ENCODE measurements at regions of chr2 and their contacts with region 1.

Region 1: DNA sequence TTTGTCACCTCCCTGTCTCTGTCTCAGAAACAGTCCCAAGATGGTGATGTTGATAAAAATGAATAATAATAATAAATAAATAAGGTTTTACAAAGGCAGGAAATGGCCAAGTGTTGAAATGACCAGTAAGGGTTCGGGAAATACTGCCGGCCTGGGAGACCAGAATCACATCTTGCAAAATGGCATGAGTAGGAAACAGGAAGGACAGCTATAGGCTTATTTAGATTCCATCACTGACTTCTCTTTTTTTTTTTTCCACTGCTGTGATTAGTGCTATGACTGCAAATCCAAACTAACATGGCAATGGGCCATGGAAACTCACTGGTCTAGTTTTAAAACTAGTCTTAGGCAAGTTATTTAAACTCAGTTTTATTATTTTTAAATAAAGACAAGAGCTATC is 60.6 kb downstream of the SCN1A start:
- DNase-seq: peak in 1 of 4 donors; percentile 6
- ATAC-seq: no peak
- H3K4me3 ChIP-seq: no peak overlapping the region
- H3K27ac ChIP-seq: no peak overlapping the region
- H3K4me1 ChIP-seq: no peaks in the 10 kb centered on the region
- H3K27me3 ChIP-seq: no peaks in the 10 kb centered on the region
- CTCF ChIP-seq: no peak
- POLR2A ChIP-seq: no peak

Region 2: DNA sequence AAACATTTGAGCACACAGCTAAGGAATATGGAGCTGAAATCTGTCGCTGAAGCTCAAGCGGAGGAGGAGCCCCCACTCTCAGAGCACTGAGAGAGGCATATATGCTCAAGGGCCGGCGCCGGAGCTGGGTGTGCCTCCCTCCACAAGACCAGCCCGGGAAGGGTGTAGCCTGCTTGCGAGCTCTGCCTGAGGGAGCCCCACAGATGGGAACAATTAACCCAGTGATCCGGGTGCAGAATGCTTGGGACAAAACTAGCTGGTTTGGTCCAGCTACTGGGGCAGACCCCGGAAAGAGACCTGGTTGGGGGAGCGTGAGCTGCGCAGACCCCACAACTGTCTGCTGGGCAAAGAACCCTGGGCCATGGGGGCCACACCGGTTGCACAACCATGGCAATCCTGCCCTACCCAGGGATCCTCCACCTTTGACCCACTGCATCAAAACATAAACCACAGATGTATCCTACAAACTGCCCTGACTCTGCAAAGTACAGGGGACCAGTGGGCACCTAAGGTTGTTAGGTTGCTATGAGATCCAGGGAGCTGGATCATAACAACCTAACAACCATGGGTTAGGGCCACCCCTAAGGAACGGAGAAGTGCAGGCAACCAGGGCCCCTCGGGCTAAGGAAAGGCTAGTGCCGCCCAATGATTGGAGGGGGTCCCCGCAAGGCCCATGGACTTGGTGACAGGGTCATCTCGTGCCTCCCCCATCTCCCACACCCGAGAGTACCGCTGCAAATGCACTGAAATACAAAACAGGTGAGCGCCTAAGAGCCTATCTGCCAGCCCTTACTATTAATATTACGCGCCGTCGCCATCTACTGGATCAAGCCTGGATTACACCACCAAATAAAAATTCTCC is 114.0 kb after region 1 on chr2:
- intact Hi-C with region 1: loop called (anchors 10 kb)
- DNase-seq: peak; percentile 70 to 83 (median 76)
- ATAC-seq: peak; percentile 93
- H3K4me3 ChIP-seq: no peak overlapping the region
- H3K27ac ChIP-seq: no peak overlapping the region
- H3K4me1 ChIP-seq: peaks cover 3% of the 10 kb centered on the region
- H3K27me3 ChIP-seq: no peaks in the 10 kb centered on the region
- CTCF ChIP-seq: peak; percentile 46 to 84 (median 67)
- POLR2A ChIP-seq: no peak

Measured in body of pancreas (tissue), 4 donors.